Prostate gland (tissue), 2 donors: ENCODE measurements at regions of chr9 and their contacts with region 1.

Region 1: DNA sequence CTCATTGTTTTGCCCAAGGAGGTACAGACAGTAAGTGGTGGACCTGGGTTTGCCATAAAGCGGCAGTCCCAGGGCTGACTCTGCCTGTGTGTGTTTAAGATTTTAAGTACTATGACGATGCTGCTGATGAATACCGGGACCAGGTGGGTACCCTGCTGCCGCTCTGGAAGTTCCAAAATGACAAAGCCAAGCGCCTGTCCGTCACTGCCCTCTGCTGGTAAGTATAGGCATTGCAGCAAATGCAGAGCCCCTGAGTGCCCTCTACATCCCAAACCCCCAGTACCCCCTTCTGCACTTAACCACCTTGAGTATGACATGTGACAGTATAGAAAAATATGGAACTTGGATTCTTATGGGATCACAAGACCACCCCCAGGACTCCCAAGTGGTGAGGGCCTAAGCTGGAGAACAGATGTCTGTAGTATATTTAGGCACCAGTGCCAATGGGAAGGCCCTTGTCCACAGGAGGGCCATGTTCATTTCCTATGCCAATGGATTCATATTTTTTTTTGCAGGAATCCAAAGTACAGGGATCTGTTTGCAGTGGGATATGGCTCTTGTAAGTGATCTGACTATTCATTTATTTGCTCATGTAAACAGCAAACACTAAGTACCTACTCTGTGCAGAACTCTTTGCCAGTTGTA is 22.0 kb downstream of the ENHO start:
- DNase-seq: peak; percentile 51
- H3K4me3 ChIP-seq: no peak overlapping the region
- H3K27ac ChIP-seq: no peak overlapping the region
- H3K4me1 ChIP-seq: peaks cover 20% of the 10 kb centered on the region
- H3K27me3 ChIP-seq: no peaks in the 10 kb centered on the region
- CTCF ChIP-seq: peak; percentile 86 to 96 (median 91)
- POLR2A ChIP-seq: no peak

Region 2: GRCh38 chr9:34403554-34404380 is 97.0 kb before region 1 on chr9:
- intact Hi-C with region 1: loop called (anchors 2 kb)
- DNase-seq: peak; percentile 61
- H3K4me3 ChIP-seq: no peak overlapping the region
- H3K27ac ChIP-seq: no peak overlapping the region
- H3K4me1 ChIP-seq: no peaks in the 10 kb centered on the region
- H3K27me3 ChIP-seq: no peaks in the 10 kb centered on the region
- CTCF ChIP-seq: peak; percentile 88 to 94 (median 90)
- POLR2A ChIP-seq: no peak

Region 3: GRCh38 chr9:34437006-34437925 is 63.5 kb before region 1 on chr9:
- intact Hi-C with region 1: loop called (anchors 1 kb)
- DNase-seq: peak; percentile 62
- H3K4me3 ChIP-seq: no peak overlapping the region
- H3K27ac ChIP-seq: no peak overlapping the region
- H3K4me1 ChIP-seq: peaks cover 3% of the 10 kb centered on the region
- H3K27me3 ChIP-seq: no peaks in the 10 kb centered on the region
- CTCF ChIP-seq: peak; percentile 12 to 79 (median 66)
- POLR2A ChIP-seq: no peak

Region 4: DNA sequence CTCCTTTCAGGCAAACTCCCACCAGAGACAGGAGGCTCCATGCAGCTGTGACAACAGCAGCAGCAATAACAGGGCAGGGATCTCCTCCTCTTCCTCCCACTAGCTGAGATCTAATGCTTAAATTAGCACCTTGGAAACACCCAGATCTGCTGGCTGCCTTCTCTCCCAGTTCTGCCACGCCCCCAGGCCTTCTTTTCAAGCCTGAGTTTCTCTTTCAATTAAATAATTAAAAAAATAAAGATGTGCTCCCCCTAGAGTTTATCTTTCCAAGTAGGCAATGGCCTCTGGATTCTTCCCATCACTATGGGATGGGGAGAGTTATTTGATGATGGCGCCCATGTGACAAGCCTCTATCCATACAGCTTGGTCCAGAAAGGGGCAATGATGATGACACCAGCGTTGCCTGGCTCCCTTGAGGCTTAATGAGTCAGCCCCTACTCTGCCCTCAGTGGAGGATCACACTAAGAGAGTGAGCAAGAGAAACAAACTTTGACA is 46.1 kb before region 1 on chr9:
- intact Hi-C with region 1: no loop called
- DNase-seq: no peak
- H3K4me3 ChIP-seq: no peak overlapping the region
- H3K27ac ChIP-seq: no peak overlapping the region
- H3K4me1 ChIP-seq: peaks cover 5% of the 10 kb centered on the region
- H3K27me3 ChIP-seq: no peaks in the 10 kb centered on the region
- CTCF ChIP-seq: no peak
- POLR2A ChIP-seq: no peak

Region 5: GRCh38 chr9:34522971-34523797 is 22.4 kb after region 1 on chr9 and contains the start of gene ENHO:
- intact Hi-C with region 1: loop called (anchors 2 kb)
- DNase-seq: peak; percentile 84
- H3K4me3 ChIP-seq: peak within 1 kb of the TSS; percentile 41 to 54
- H3K27ac ChIP-seq: peak within 1 kb of the TSS; percentile 37 to 57
- H3K4me1 ChIP-seq: no peaks in the 10 kb centered on the region
- H3K27me3 ChIP-seq: no peaks in the 10 kb centered on the region
- CTCF ChIP-seq: no peak
- POLR2A ChIP-seq: peak; percentile 9
- total RNA-seq, gene ENHO: 20.9 to 28.2 TPM

Region 6: DNA sequence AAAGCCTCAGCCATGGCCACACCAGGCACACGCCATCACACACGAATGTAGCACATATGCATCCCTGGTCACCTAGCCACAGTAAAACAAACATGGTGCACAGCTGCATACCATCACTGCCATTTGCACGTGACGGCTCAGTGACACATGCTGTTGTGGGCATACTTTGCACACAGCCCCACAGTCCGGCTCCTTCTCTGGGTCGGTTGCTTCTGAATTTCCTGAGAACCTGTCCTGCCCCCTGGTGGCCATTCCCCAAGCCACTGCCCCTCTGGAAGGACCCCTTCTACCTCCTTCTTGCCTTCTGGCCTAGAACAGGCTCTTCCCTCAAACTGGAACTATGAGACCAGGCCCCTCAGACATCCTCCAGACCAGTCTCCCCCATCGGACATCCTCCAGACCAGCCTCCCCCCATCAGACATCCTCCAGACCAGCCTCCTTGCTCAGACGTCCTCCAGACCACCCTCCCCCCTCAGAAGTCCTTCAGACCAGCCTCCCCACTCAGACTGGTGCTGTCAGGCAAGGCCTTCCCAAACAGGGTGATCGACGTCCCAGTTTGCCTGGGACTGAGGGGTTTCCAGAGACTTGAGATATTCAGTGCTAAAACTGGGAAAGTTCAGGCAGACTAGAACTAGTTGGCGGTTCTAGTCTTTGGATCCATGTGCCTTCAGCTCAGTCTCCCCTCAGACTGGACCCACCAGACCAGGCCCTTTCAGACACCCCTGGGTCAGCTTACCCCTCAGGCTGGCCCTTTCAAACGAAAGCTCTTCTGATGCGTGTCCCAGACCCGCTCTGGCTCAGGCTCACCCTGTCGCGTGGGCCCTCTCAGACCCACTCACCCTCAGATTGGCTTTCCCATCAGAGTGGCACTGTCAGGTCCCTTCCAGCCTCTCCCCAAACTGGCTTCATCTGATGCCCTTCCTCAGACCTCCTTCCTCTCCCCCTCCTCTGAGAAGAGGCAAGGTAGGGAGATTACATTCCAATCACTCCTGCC is 46.4 kb after region 1 on chr9:
- intact Hi-C with region 1: loop called (anchors 5 kb)
- DNase-seq: peak; percentile 63
- H3K4me3 ChIP-seq: no peak overlapping the region
- H3K27ac ChIP-seq: no peak overlapping the region
- H3K4me1 ChIP-seq: peaks cover 6% of the 10 kb centered on the region
- H3K27me3 ChIP-seq: no peaks in the 10 kb centered on the region
- CTCF ChIP-seq: peak; percentile 64 to 89 (median 78)
- POLR2A ChIP-seq: no peak

Region 7: DNA sequence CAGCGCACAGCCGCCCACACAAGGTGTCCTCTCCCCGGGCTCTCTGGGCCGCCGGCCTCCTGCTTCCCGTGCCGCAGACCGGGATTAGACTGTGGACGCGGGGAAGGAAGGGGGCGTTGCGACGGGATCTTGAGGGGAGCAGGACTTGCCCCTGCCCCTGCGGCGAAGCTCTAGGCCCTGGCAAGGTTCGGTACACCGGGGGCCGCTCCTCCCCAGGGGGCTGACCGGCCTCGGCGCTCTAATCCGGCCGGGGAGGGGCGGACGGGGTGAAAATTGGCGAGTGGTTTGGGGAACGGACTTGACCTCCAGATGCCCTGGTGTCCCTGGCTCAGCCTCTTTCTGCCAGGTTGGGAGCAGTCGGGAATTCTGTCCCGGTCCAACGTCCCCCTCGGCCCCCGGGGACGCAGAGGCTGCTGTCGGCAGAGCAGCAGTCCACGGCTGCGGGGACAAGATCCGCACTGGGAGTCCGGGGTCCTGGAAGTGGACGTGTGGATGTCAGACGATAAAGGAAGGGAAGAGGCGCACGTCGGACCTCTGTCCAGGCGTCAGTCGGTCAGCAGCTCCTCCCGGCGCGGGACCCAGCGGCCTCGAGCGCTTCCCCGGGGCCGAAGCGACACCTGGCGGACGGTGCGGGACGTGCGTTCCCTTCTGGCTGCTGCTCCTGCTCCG is 90.6 kb after region 1 on chr9:
- intact Hi-C with region 1: loop called (anchors 2 kb)
- DNase-seq: peak; percentile 84
- H3K4me3 ChIP-seq: no peak overlapping the region
- H3K27ac ChIP-seq: no peak overlapping the region
- H3K4me1 ChIP-seq: peaks cover 17% of the 10 kb centered on the region
- H3K27me3 ChIP-seq: no peaks in the 10 kb centered on the region
- CTCF ChIP-seq: peak; percentile 89 to 96 (median 94)
- POLR2A ChIP-seq: no peak